SK-N-SH (cell line): ENCODE measurements at regions of chr20 and their contacts with region 1.

Region 1: DNA sequence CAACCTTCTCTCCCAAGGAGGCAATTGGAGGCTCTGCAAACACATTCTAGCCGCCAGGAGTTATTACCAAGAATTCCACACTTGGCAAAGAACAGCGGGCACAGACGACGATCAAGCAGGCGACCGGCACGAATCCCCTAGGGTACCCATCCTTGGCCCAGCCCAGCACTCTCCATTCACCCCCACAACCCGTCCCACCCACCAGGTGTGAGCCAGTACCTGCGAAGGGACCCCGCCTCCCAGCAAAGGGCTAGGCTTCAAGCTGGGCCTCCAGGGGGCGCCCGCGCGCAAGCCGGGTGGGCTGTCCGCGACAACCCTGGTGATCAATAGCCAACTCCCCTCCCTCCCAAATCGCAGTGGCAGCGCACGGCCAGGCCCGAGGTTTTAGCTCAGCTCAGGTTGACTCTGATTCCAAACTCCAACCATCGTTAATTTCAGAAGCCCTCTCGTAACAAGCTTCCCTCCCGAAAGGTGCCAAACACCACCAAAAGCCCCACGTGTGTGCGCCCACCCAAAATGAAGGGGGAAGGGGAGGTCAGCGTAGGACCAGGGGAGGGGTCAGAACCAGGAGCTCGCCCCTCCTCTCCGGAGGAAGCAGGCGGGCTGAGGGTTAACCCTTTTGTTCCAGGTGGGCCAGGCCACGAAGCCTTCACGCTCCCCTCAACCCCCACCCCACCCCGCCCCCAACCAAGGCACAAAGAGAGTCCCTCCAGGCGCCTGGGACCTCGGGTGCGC is 2.1 kb downstream of the SALL4 start:
- DNase-seq: peak; percentile 92
- H3K4me3 ChIP-seq: peak overlapping the region; percentile 62 to 67
- H3K27ac ChIP-seq: no peak overlapping the region; a peak in 1 of 4 replicates
- H3K4me1 ChIP-seq: peaks cover 9 to 14% of the 10 kb centered on the region in 2 experiments; a peak in 2 of 4 replicates
- H3K27me3 ChIP-seq: no peaks in the 10 kb centered on the region
- CTCF ChIP-seq: peak; percentile 90
- EP300 ChIP-seq: no peak
- RAD21 ChIP-seq: peak; percentile 78

Region 2: GRCh38 chr20:51639206-51639832 is 160.9 kb before region 1 on chr20:
- CTCF ChIA-PET with region 1: interaction called, 31 read pairs
- POLR2A ChIA-PET with region 1: no interaction called
- DNase-seq: peak; percentile 79
- H3K4me3 ChIP-seq: no peak overlapping the region; a peak in 1 of 4 replicates
- H3K27ac ChIP-seq: no peak overlapping the region
- H3K4me1 ChIP-seq: peaks cover 0 to 4% of the 10 kb centered on the region in 2 experiments; a peak in 2 of 4 replicates
- H3K27me3 ChIP-seq: no peaks in the 10 kb centered on the region
- CTCF ChIP-seq: peak; percentile 85
- EP300 ChIP-seq: no peak
- RAD21 ChIP-seq: peak; percentile 94

Region 3: GRCh38 chr20:51776261-51776660 is 24.0 kb before region 1 on chr20:
- CTCF ChIA-PET with region 1: interaction called, 17 read pairs
- POLR2A ChIA-PET with region 1: no interaction called
- DNase-seq: no peak
- H3K4me3 ChIP-seq: no peak overlapping the region
- H3K27ac ChIP-seq: no peak overlapping the region
- H3K4me1 ChIP-seq: no peaks in the 10 kb centered on the region
- H3K27me3 ChIP-seq: no peaks in the 10 kb centered on the region
- CTCF ChIP-seq: no peak
- EP300 ChIP-seq: no peak
- RAD21 ChIP-seq: no peak

Region 4: GRCh38 chr20:51789434-51789833 is 10.8 kb before region 1 on chr20:
- CTCF ChIA-PET with region 1: interaction called, 28 read pairs
- POLR2A ChIA-PET with region 1: no interaction called
- DNase-seq: no peak
- H3K4me3 ChIP-seq: no peak overlapping the region
- H3K27ac ChIP-seq: no peak overlapping the region
- H3K4me1 ChIP-seq: no peaks in the 10 kb centered on the region
- H3K27me3 ChIP-seq: no peaks in the 10 kb centered on the region
- CTCF ChIP-seq: no peak
- EP300 ChIP-seq: no peak
- RAD21 ChIP-seq: no peak

Region 5: DNA sequence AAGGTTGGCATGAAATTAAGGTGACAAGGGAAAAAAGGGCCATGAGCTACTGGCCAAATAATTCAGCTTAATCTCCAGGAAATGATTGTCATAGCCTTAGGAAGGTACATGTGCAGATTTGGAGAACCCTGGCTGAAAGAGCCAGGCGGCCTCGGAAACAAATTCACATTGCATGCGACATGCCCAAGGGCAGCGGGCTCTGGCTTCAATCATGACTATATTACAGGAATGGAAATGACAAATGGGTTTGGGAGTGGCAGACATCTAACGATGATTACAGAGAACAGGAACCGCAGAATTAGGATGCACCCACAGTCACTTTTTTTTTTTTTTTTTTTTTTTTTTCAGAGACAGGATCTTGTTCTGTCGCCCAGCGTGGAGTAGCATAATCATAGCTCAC is 114.5 kb after region 1 on chr20:
- CTCF ChIA-PET with region 1: interaction called, 14 read pairs
- POLR2A ChIA-PET with region 1: interaction called, 3 read pairs
- DNase-seq: peak; percentile 78
- H3K4me3 ChIP-seq: no peak overlapping the region
- H3K27ac ChIP-seq: peak overlapping the region in 1 of 2 experiments; percentile 84; a peak in 2 of 4 replicates
- H3K4me1 ChIP-seq: peaks cover 13 to 14% of the 10 kb centered on the region in 2 experiments
- H3K27me3 ChIP-seq: no peaks in the 10 kb centered on the region
- CTCF ChIP-seq: no peak
- EP300 ChIP-seq: peak; percentile 47 to 97; a peak in 3 of 4 replicates
- RAD21 ChIP-seq: peak; percentile 39; the same call in 1 of the 2 replicates

Region 6: DNA sequence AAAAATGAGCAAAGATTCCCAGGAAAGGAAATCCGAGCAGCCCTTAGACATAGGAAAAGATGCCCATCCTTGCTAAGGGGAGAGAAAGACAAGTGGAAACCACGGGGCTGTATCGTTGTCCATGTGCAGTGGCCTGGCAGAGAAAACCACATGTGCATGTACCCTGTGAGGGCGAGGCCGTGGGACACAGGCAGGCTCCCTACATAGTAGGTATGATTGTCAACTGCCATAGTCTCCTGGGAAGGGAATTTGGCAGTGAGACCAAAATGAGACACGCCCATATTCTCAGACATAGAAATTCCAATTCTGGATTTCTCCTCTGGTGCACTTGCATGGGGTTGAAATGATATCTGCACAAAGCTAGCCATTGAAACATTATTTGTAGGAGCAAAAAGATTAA is 171.8 kb after region 1 on chr20:
- CTCF ChIA-PET with region 1: interaction called, 25 read pairs
- POLR2A ChIA-PET with region 1: no interaction called
- DNase-seq: no peak
- H3K4me3 ChIP-seq: no peak overlapping the region
- H3K27ac ChIP-seq: no peak overlapping the region
- H3K4me1 ChIP-seq: no peaks in the 10 kb centered on the region
- H3K27me3 ChIP-seq: no peaks in the 10 kb centered on the region
- CTCF ChIP-seq: no peak
- EP300 ChIP-seq: no peak
- RAD21 ChIP-seq: no peak

Region 7: GRCh38 chr20:52083627-52084232 is 283.5 kb after region 1 on chr20:
- CTCF ChIA-PET with region 1: interaction called, 59 read pairs
- POLR2A ChIA-PET with region 1: no interaction called
- DNase-seq: peak; percentile 80
- H3K4me3 ChIP-seq: no peak overlapping the region; a peak in 1 of 4 replicates
- H3K27ac ChIP-seq: no peak overlapping the region
- H3K4me1 ChIP-seq: no peaks in the 10 kb centered on the region; a peak in 1 of 4 replicates
- H3K27me3 ChIP-seq: no peaks in the 10 kb centered on the region
- CTCF ChIP-seq: peak; percentile 82
- EP300 ChIP-seq: 0 out of 4 replicates have a peak, but pooled peaks of 1 of the 2 experiments have one; percentile 12
- RAD21 ChIP-seq: peak; percentile 99